CD4-positive, alpha-beta memory T cell (primary cell): ENCODE measurements at regions of chr4 and their contacts with region 1.

Region 1: DNA sequence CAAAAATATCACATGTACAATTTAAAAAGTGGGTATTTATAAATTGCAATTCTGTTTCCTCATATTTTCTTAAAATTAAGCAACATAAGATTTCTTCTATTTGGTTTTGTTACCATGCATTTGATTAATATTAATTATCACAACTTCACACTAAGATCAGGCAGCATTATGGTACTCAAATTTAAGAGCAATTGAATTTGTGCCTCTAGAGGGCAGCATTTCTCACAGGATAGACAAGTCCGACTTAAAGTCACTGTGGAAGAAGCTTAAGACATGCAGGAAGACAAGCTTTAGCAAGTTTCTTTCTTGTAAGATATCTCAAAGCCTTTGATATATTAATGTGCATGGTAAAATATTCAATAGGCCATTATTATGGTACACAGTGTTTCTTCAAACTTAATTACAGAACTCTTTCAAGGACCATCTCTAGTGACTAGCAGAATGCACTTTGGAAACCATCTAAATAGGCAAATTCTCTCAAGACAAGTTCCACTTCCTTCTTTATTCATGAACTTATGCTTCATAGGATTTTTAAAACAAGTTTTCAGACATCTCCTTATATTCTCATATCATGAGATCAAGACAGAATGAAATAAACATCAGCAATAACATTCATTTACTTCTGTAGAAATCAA is 35.0 kb downstream of the FBXW7 start:
- DNase-seq: peak; percentile 76 to 82 (median 80)
- H3K4me3 ChIP-seq: no peak overlapping the region
- H3K4me3 Mint-ChIP-seq: no peak overlapping the region
- H3K27ac ChIP-seq: no peak overlapping the region
- H3K27ac Mint-ChIP-seq: peak overlapping the region in 6 of 7 donors; percentile 0 to 85 (median 58)
- H3K4me1 ChIP-seq: peaks cover 6% of the 10 kb centered on the region
- H3K4me1 Mint-ChIP-seq: peaks cover 27 to 44% (median 36%) of the 10 kb centered on the region in 4 donors
- H3K27me3 ChIP-seq: no peaks in the 10 kb centered on the region
- H3K27me3 Mint-ChIP-seq: no peaks in the 10 kb centered on the region

Region 2: DNA sequence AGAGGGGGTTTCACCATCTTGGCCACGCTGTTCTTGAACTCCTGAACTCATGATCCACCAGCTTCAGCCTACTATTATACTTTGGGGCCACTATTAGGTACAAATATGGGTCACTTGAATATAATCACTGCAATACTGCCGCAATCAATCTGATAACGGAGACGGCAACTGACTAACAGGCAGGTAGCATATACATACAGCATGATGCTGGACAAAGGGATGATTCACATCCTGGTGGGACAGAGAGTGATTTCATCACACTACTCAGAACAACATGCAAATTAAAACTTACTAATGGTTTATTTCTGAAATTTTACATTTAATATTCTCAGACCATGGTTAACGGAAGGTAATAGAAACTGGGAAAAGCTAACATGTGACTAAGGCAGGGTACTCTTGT is 1496.7 kb before region 1 on chr4:
- CTCF ChIA-PET with region 1: no interaction called
- POLR2A ChIA-PET with region 1: no interaction called
- intact Hi-C with region 1: no loop called
- DNase-seq: no peak
- H3K4me3 ChIP-seq: no peak overlapping the region
- H3K4me3 Mint-ChIP-seq: peak overlapping the region in 1 of 8 donors; percentile 58
- H3K27ac ChIP-seq: no peak overlapping the region
- H3K27ac Mint-ChIP-seq: peak overlapping the region in 3 of 7 donors; percentile 14 to 33 (median 29)
- H3K4me1 ChIP-seq: peaks cover 28% of the 10 kb centered on the region
- H3K4me1 Mint-ChIP-seq: peaks cover 33 to 63% (median 38%) of the 10 kb centered on the region in 4 donors
- H3K27me3 ChIP-seq: no peaks in the 10 kb centered on the region
- H3K27me3 Mint-ChIP-seq: no peaks in the 10 kb centered on the region

Region 3: GRCh38 chr4:151362404-151363164 is 1138.3 kb before region 1 on chr4:
- CTCF ChIA-PET with region 1: no interaction called
- POLR2A ChIA-PET with region 1: no interaction called
- intact Hi-C with region 1: loop called (anchors 10 kb)
- DNase-seq: peak; percentile 72 to 77 (median 75)
- H3K4me3 ChIP-seq: no peak overlapping the region
- H3K4me3 Mint-ChIP-seq: peak overlapping the region in 1 of 8 donors; percentile 20
- H3K27ac ChIP-seq: no peak overlapping the region
- H3K27ac Mint-ChIP-seq: no peak overlapping the region
- H3K4me1 ChIP-seq: no peaks in the 10 kb centered on the region
- H3K4me1 Mint-ChIP-seq: peaks cover 0 to 5% (median 4%) of the 10 kb centered on the region in 4 donors
- H3K27me3 ChIP-seq: no peaks in the 10 kb centered on the region
- H3K27me3 Mint-ChIP-seq: peaks cover 2 to 7% of the 10 kb centered on the region in 2 donors

Region 4: DNA sequence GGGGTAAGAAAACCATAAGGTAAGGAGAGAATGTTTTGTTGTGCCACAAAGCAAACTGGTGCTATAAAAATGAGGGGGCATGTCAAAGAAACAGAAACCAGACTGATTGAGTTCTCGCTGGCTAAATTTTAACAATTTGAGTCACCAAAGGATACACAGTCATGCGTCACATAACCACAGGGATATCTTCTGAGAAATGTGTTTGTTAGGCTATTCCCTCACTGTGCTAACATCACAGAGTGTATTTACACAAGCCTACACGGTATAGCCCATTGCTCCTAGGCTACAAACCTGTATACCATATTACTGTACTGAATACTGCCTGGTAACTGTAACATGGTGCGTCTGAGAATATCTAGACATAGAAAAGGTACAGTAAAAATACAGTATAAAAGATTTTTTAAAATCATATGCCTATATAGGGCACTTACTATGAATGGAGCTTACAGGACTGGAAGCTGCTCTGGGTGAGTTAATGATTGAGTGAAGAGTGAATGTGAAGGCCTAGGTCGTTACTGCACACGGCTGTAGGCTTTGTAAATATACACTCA is 15.1 kb before region 1 on chr4:
- CTCF ChIA-PET with region 1: interaction called, 18 read pairs
- POLR2A ChIA-PET with region 1: no interaction called
- intact Hi-C with region 1: no loop called
- DNase-seq: peak; percentile 55 to 74 (median 67)
- H3K4me3 ChIP-seq: no peak overlapping the region
- H3K4me3 Mint-ChIP-seq: peak overlapping the region in 4 of 8 donors; percentile 25 to 58 (median 40)
- H3K27ac ChIP-seq: no peak overlapping the region
- H3K27ac Mint-ChIP-seq: peak overlapping the region in 6 of 7 donors; percentile 25 to 53 (median 46)
- H3K4me1 ChIP-seq: peaks cover 34% of the 10 kb centered on the region
- H3K4me1 Mint-ChIP-seq: peaks cover 31 to 51% (median 36%) of the 10 kb centered on the region in 4 donors
- H3K27me3 ChIP-seq: no peaks in the 10 kb centered on the region
- H3K27me3 Mint-ChIP-seq: no peaks in the 10 kb centered on the region

Region 5: GRCh38 chr4:152525873-152526272 is 25.0 kb after region 1 on chr4:
- CTCF ChIA-PET with region 1: interaction called, 53 read pairs
- POLR2A ChIA-PET with region 1: no interaction called
- intact Hi-C with region 1: no loop called
- DNase-seq: no peak
- H3K4me3 ChIP-seq: no peak overlapping the region
- H3K4me3 Mint-ChIP-seq: peak overlapping the region in 1 of 8 donors; percentile 7
- H3K27ac ChIP-seq: no peak overlapping the region
- H3K27ac Mint-ChIP-seq: no peak overlapping the region
- H3K4me1 ChIP-seq: peaks cover 74% of the 10 kb centered on the region
- H3K4me1 Mint-ChIP-seq: peaks cover 53 to 75% (median 64%) of the 10 kb centered on the region in 4 donors
- H3K27me3 ChIP-seq: no peaks in the 10 kb centered on the region
- H3K27me3 Mint-ChIP-seq: no peaks in the 10 kb centered on the region

Region 6: GRCh38 chr4:152599095-152599494 is 98.2 kb after region 1 on chr4:
- CTCF ChIA-PET with region 1: interaction called, 10 read pairs
- POLR2A ChIA-PET with region 1: no interaction called
- intact Hi-C with region 1: no loop called
- DNase-seq: no peak
- H3K4me3 ChIP-seq: no peak overlapping the region
- H3K4me3 Mint-ChIP-seq: no peak overlapping the region
- H3K27ac ChIP-seq: no peak overlapping the region
- H3K27ac Mint-ChIP-seq: peak overlapping the region in 1 of 7 donors; percentile 84
- H3K4me1 ChIP-seq: no peaks in the 10 kb centered on the region
- H3K4me1 Mint-ChIP-seq: peaks cover 0 to 5% (median 2%) of the 10 kb centered on the region in 4 donors
- H3K27me3 ChIP-seq: no peaks in the 10 kb centered on the region
- H3K27me3 Mint-ChIP-seq: no peaks in the 10 kb centered on the region

Region 7: GRCh38 chr4:152640058-152640833 is 139.3 kb after region 1 on chr4:
- CTCF ChIA-PET with region 1: interaction called, 360 read pairs
- POLR2A ChIA-PET with region 1: interaction called, 7 read pairs
- intact Hi-C with region 1: loop called (anchors 1 kb)
- DNase-seq: peak in 4 of 5 donors; percentile 25 to 52 (median 34)
- H3K4me3 ChIP-seq: no peak overlapping the region
- H3K4me3 Mint-ChIP-seq: no peak overlapping the region
- H3K27ac ChIP-seq: no peak overlapping the region
- H3K27ac Mint-ChIP-seq: peak overlapping the region in 3 of 7 donors; percentile 18 to 64 (median 43)
- H3K4me1 ChIP-seq: peaks cover 23% of the 10 kb centered on the region
- H3K4me1 Mint-ChIP-seq: peaks cover 24 to 27% (median 27%) of the 10 kb centered on the region in 4 donors
- H3K27me3 ChIP-seq: no peaks in the 10 kb centered on the region
- H3K27me3 Mint-ChIP-seq: no peaks in the 10 kb centered on the region

Region 8: GRCh38 chr4:152735396-152735859 is 234.5 kb after region 1 on chr4:
- CTCF ChIA-PET with region 1: interaction called, 71 read pairs
- POLR2A ChIA-PET with region 1: no interaction called
- intact Hi-C with region 1: loop called (anchors 1 kb)
- DNase-seq: peak in 4 of 5 donors; percentile 36 to 39 (median 38)
- H3K4me3 ChIP-seq: no peak overlapping the region
- H3K4me3 Mint-ChIP-seq: no peak overlapping the region
- H3K27ac ChIP-seq: no peak overlapping the region
- H3K27ac Mint-ChIP-seq: peak overlapping the region in 1 of 7 donors; percentile 0
- H3K4me1 ChIP-seq: no peaks in the 10 kb centered on the region
- H3K4me1 Mint-ChIP-seq: peaks cover 0 to 3% (median 0%) of the 10 kb centered on the region in 4 donors
- H3K27me3 ChIP-seq: no peaks in the 10 kb centered on the region
- H3K27me3 Mint-ChIP-seq: peaks cover 2 to 3% of the 10 kb centered on the region in 2 donors